CD4-positive, alpha-beta memory T cell (primary cell): ENCODE measurements at regions of chr10 and their contacts with region 1.

Region 1: GRCh38 chr10:71696628-71697326 is 22.8 kb downstream of the C10orf105 start:
- DNase-seq: peak; percentile 54 to 60 (median 56)
- H3K4me3 ChIP-seq: no peak overlapping the region
- H3K4me3 Mint-ChIP-seq: peak overlapping the region in 1 of 8 donors; percentile 10
- H3K27ac ChIP-seq: no peak overlapping the region
- H3K27ac Mint-ChIP-seq: peak overlapping the region in 3 of 7 donors; percentile 24 to 57 (median 46)
- H3K4me1 ChIP-seq: peaks cover 51% of the 10 kb centered on the region
- H3K4me1 Mint-ChIP-seq: peaks cover 23 to 60% (median 35%) of the 10 kb centered on the region in 4 donors
- H3K27me3 ChIP-seq: no peaks in the 10 kb centered on the region
- H3K27me3 Mint-ChIP-seq: no peaks in the 10 kb centered on the region

Region 2: GRCh38 chr10:71314028-71314693 is 382.6 kb before region 1 on chr10:
- CTCF ChIA-PET with region 1: interaction called, 20 read pairs
- POLR2A ChIA-PET with region 1: no interaction called
- intact Hi-C with region 1: loop called (anchors 1 kb)
- DNase-seq: peak; percentile 42 to 54 (median 48)
- H3K4me3 ChIP-seq: no peak overlapping the region
- H3K4me3 Mint-ChIP-seq: no peak overlapping the region
- H3K27ac ChIP-seq: no peak overlapping the region
- H3K27ac Mint-ChIP-seq: no peak overlapping the region
- H3K4me1 ChIP-seq: peaks cover 11% of the 10 kb centered on the region
- H3K4me1 Mint-ChIP-seq: peaks cover 6 to 18% (median 12%) of the 10 kb centered on the region in 4 donors
- H3K27me3 ChIP-seq: no peaks in the 10 kb centered on the region
- H3K27me3 Mint-ChIP-seq: peaks cover 4 to 7% of the 10 kb centered on the region in 2 donors

Region 3: DNA sequence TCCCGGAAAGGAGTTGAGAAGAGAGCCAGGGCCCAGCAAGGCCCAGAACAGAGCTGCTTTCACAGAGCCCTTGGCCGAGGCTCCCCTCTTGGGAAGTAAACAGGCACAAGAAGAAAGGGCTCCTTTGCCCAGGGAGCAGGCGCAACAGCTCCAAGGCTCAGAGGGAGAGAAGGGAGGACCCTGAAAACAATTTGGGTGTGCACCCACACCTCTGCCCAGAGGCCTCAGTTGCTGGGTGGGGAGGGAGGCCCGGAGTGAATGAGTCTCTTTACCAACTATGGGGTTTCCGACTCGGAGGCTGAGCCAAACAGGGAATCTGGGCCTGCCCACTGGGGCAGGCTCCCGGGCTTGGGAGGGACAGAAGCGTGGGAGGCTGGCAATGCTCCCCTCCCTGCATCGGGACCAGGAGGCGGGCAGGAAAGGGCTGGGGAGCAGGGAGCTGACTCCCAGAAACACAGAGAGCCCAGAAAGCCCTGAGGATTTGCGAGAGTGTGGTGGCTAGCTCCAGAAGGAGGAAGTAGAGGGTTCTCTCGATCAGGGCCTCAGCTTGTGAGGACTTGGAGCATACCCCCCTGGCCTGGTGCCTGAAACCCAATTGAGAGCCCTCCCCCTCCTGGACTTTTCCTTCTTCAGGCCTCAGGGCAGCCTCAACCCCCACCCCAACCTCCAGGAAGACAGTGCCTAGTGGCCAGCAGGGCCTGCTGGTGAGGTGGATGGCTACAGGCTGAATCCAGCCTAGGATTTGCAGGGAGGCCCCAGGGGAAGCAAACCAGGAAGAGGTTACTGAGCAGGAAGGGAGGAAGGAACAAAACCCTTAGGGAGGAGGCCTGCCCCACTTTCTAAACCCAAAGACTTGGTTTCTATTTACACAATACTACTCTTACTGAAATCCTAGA is 16.6 kb after region 1 on chr10:
- CTCF ChIA-PET with region 1: interaction called, 143 read pairs
- POLR2A ChIA-PET with region 1: interaction called, 8 read pairs
- intact Hi-C with region 1: no loop called
- DNase-seq: peak in 3 of 5 donors; percentile 35 to 51 (median 49)
- H3K4me3 ChIP-seq: peak overlapping the region; percentile 1 to 21
- H3K4me3 Mint-ChIP-seq: peak overlapping the region; percentile 76 to 93 (median 85)
- H3K27ac ChIP-seq: peak overlapping the region; percentile 69
- H3K27ac Mint-ChIP-seq: peak overlapping the region; percentile 96 to 99 (median 98)
- H3K4me1 ChIP-seq: peaks cover 62% of the 10 kb centered on the region
- H3K4me1 Mint-ChIP-seq: peaks cover 33 to 84% (median 62%) of the 10 kb centered on the region in 4 donors
- H3K27me3 ChIP-seq: no peaks in the 10 kb centered on the region
- H3K27me3 Mint-ChIP-seq: no peaks in the 10 kb centered on the region

Region 4: DNA sequence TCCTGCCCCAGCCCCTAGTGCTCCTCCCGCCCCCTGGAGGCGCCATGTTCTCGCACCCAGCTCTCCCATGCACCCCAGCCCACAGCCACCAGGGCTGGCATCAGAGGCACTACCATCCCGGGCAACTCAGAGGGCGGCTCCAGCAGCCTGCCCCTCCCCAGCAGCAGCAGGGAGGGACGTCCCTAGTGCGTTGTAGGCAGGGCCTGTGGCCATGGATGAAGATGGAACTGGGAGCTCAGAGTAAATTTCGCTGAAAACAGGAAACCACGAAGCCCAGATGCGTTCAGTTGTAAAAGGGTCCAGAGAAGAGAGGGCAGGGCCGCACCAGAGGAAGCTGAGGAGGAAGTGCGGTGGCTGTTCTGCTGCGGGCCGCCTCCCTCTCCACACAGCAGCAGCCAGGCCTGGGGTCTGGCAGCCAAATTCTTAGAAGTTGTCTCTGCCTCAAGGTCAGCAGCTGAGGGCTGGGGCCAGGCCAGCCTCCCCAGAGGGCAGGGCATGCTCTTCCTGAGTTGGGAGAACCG is 52.0 kb after region 1 on chr10:
- CTCF ChIA-PET with region 1: interaction called, 64 read pairs
- POLR2A ChIA-PET with region 1: interaction called, 24 read pairs
- intact Hi-C with region 1: no loop called
- DNase-seq: peak; percentile 86 to 90 (median 87)
- H3K4me3 ChIP-seq: peak overlapping the region in 1 of 2 donors; percentile 39
- H3K4me3 Mint-ChIP-seq: peak overlapping the region; percentile 76 to 89 (median 84)
- H3K27ac ChIP-seq: peak overlapping the region; percentile 58
- H3K27ac Mint-ChIP-seq: peak overlapping the region; percentile 92 to 99 (median 98)
- H3K4me1 ChIP-seq: peaks cover 100% of the 10 kb centered on the region
- H3K4me1 Mint-ChIP-seq: peaks cover 74 to 98% (median 92%) of the 10 kb centered on the region in 4 donors
- H3K27me3 ChIP-seq: no peaks in the 10 kb centered on the region
- H3K27me3 Mint-ChIP-seq: no peaks in the 10 kb centered on the region

Region 5: GRCh38 chr10:71766702-71767419 is 70.1 kb after region 1 on chr10:
- CTCF ChIA-PET with region 1: interaction called, 379 read pairs
- POLR2A ChIA-PET with region 1: interaction called, 83 read pairs
- intact Hi-C with region 1: no loop called
- DNase-seq: peak in 1 of 5 donors; percentile 29
- H3K4me3 ChIP-seq: peak overlapping the region in 1 of 2 donors; percentile 25
- H3K4me3 Mint-ChIP-seq: peak overlapping the region; percentile 68 to 95 (median 78)
- H3K27ac ChIP-seq: peak overlapping the region; percentile 93
- H3K27ac Mint-ChIP-seq: peak overlapping the region; percentile 93 to 99 (median 95)
- H3K4me1 ChIP-seq: peaks cover 97% of the 10 kb centered on the region
- H3K4me1 Mint-ChIP-seq: peaks cover 67 to 99% (median 84%) of the 10 kb centered on the region in 4 donors
- H3K27me3 ChIP-seq: no peaks in the 10 kb centered on the region
- H3K27me3 Mint-ChIP-seq: no peaks in the 10 kb centered on the region

Region 6: GRCh38 chr10:71812016-71812912 is 115.5 kb after region 1 on chr10:
- CTCF ChIA-PET with region 1: interaction called, 25 read pairs
- POLR2A ChIA-PET with region 1: interaction called, 3 read pairs
- intact Hi-C with region 1: loop called (anchors 5 kb)
- DNase-seq: peak; percentile 63 to 78 (median 75)
- H3K4me3 ChIP-seq: no peak overlapping the region
- H3K4me3 Mint-ChIP-seq: no peak overlapping the region
- H3K27ac ChIP-seq: no peak overlapping the region
- H3K27ac Mint-ChIP-seq: no peak overlapping the region
- H3K4me1 ChIP-seq: no peaks in the 10 kb centered on the region
- H3K4me1 Mint-ChIP-seq: peaks cover 0 to 2% (median 0%) of the 10 kb centered on the region in 4 donors
- H3K27me3 ChIP-seq: no peaks in the 10 kb centered on the region
- H3K27me3 Mint-ChIP-seq: no peaks in the 10 kb centered on the region